ENCODE measurements at regions of chr5 and their contacts with region 1.

Region 1: DNA sequence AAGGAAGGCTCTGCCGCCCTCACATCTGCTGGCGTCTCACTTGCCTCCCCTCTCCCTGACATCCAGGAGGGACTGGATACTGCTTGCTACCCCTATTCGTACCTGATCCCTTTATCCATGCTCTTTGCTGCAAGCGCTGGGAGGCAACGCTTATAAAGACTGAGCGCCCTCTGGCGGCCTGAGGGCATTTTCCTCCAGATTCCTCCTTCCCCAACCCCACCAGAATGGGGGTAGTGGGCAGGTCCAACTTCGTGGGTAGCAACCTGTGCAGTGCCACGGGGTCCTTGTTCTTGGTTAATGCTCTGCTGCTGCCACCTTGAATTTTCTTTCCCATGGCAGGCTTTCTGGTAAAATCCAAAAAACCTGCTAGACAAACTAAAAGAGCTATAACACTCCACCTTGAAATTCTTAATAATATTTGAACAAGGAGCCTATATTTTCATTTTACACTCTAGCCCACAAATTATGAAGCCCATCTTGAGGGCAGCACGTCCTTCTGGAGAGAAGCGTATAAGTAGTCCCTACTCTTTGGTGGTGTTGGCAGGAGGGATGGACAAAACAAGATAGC is 52.4 kb downstream of the JADE2 start:
- DNase-seq: peak; percentile 74 to 85
- ATAC-seq: peak in 7 of 8 donors; percentile 36 to 65 (median 52)
- H3K4me3 ChIP-seq: no peak overlapping the region
- H3K27ac ChIP-seq: peak overlapping the region in 2 of 10 donors; percentile 41 to 48
- H3K4me1 ChIP-seq: peaks cover 16 to 63% (median 42%) of the 10 kb centered on the region in 9 donors
- H3K27me3 ChIP-seq: no peaks in the 10 kb centered on the region
- CTCF ChIP-seq: peak; percentile 65 to 91 (median 86)

Region 2: DNA sequence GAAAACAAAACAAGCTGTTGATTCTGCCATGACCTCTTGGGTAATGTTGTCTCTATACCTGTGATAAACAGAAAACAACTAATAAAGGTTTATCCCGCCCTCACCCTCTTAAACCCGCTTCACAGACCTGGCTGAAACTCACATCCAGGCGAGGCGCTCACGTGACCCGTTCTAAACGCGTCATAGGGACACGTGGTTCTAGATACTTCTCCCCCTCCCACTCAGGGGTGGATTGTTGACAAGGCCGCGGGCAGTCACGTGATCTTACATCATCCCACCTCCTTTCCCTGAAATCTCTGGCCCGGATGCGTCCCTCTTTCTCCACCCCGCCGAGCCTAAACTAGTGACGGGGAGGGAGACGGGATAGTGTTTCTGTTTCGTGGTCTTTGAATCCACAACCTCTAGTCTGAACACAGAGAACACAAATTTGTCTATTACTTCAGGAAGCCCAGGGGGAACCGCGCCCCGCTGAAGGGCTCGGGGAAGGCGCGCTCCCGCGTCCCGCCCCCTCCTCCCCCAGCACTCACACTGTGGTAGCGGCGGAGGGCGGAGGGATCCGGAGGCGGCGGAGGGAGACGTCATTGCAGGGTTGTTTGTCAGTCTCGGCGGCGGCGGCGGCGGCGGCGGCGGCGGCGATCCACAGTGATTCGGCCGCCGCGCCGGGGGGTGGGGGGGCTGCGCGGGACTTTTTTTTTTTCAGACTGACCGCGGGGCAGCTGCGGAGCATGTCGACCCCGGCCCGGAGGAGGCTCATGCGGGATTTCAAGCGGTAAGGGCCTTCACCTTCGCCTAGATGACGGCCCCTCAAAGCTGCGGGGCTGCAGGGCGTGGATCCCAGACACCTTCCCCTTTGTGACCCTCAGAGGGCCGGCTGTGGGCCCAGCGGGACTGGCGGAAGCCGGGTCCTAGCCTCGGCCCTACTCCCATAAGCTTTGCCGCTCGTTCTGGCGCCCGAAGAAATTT is 206.7 kb before region 1 on chr5 and contains the start of gene UBE2B:
- intact Hi-C with region 1: loop called in 2 of 10 experiments (anchors 5 kb)
- DNase-seq: peak; percentile 95 to 99
- ATAC-seq: peak; percentile 91 to 97 (median 95)
- H3K4me3 ChIP-seq: peak within 1 kb of the TSS; percentile 64 to 97 (median 84)
- H3K27ac ChIP-seq: peak within 1 kb of the TSS; percentile 90 to 100 (median 98)
- H3K4me1 ChIP-seq: peaks cover 0 to 64% (median 51%) of the 10 kb centered on the region in 9 donors
- H3K27me3 ChIP-seq: no peaks in the 10 kb centered on the region
- CTCF ChIP-seq: no peak
- total RNA-seq, gene UBE2B: 195 to 260 (median 227) TPM

Region 3: DNA sequence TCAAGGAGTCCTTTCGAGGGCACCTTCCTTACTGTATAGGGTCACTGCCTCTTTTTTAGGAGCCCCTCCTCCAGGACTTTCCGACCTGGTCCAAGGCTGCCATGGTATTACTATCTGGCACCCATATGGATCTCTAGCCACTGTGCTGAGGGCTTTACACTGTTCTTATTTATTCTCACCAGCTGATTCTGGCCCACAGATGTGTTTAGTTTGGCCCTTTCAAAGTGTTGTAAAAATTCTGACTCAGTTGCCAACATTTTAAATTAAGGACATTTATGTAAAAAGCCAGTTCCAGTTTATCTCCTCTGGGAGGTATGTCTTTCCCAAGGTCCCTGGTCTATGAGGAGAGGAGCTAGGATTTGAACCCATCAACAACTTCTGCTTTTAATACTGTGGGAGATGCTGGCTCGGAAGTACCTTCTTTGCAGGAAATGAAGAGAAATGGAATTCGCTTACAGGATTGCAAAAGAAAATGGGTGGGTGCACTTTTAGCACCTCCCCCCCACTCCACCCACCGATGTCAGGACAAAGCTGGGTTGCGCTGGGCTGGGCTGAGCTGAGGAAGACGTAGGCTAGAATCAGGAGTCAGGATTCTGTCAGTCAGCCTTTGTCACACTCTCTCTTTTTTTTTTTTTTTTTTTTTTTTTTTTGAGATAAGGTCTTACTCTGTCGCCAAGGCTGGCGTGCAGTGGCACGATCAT is 44.6 kb before region 1 on chr5:
- intact Hi-C with region 1: loop called in 7 of 10 experiments (anchors 2 to 10 kb)
- DNase-seq: peak in 1 of 2 donors; percentile 69
- ATAC-seq: peak; percentile 34 to 76 (median 63)
- H3K4me3 ChIP-seq: no peak overlapping the region
- H3K27ac ChIP-seq: peak overlapping the region in 7 of 10 donors; percentile 15 to 44 (median 28)
- H3K4me1 ChIP-seq: peaks cover 33 to 77% (median 60%) of the 10 kb centered on the region in 9 donors
- H3K27me3 ChIP-seq: no peaks in the 10 kb centered on the region
- CTCF ChIP-seq: no peak